ENCODE measurements at regions of chr7 and their contacts with region 1.

Region 1: GRCh38 chr7:50696810-50697582 is 85.7 kb downstream of the GRB10 start:
- DNase-seq: peak; percentile 15
- H3K4me3 Mint-ChIP-seq: no peak overlapping the region
- H3K27ac Mint-ChIP-seq: no peak overlapping the region
- H3K4me1 Mint-ChIP-seq: peaks cover 19% of the 10 kb centered on the region
- H3K27me3 Mint-ChIP-seq: no peaks in the 10 kb centered on the region

Region 2: DNA sequence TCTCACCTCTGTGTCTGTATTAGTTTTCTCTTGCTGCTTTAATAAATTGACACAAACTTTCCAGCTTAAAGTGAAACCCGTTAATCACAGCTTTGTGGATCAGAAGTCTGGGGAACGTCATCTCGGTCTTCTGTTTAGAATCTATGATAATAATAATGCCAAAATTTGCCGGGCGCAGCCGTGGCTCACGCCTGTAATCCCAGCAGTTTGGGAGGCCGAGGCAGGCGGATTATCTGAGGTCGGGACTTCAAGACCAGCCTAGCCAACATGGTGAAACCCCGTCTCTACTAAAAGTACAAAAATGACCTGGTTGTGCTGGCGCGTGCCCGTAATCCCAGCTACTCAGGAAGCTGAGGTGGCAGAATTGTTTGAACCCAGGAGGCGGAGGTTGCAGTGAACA is 595.1 kb before region 1 on chr7:
- CTCF ChIA-PET with region 1: no interaction called
- intact Hi-C with region 1: no loop called
- DNase-seq: no peak
- H3K4me3 Mint-ChIP-seq: no peak overlapping the region
- H3K27ac Mint-ChIP-seq: no peak overlapping the region
- H3K4me1 Mint-ChIP-seq: no peaks in the 10 kb centered on the region
- H3K27me3 Mint-ChIP-seq: peaks cover 2% of the 10 kb centered on the region

Region 3: DNA sequence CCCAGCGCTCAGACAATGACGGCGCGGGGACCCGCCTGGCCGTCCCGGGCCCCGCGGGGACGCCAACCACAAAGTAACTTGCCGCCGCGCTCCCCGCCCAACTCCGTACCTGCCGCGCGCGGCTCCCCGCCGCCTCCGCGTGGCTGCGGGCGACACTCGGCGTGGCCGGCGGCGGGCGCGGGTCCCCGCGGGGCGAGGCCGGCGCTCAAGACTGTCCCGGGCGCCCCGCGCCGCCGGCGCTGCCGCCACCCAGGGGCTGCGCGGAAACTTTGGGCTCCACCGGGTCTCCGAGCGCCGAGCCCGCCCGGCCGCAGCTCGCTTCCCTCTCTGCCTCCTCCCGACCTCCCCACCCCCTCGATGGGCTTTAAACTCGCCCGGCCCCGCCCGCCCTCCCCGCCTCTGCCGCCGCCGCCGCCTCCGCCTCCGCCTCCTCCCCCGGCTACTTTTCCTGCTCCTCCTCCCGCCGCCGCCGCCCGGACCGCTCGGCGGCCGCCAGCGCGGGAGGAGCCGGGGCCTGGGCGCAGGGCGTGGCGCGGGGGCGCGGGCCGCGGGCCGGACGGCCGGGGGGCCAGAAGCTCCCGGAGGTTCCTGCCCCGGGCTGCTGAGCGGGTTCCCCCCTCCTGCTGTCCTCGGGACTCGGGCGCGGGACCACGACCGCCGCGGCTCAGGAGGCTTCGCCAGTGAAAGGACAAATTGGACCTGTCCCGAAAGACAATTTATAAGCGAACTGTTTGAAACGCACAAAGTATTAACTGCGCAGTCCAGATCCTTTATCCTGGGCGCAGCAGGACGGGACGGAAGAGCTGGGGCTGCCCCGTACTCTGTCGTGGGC is 96.3 kb after region 1 on chr7:
- CTCF ChIA-PET with region 1: interaction called, 3 read pairs
- intact Hi-C with region 1: loop called (anchors 2 kb)
- DNase-seq: peak; percentile 40
- H3K4me3 Mint-ChIP-seq: peak overlapping the region; percentile 63
- H3K27ac Mint-ChIP-seq: no peak overlapping the region
- H3K4me1 Mint-ChIP-seq: peaks cover 17% of the 10 kb centered on the region
- H3K27me3 Mint-ChIP-seq: peaks cover 26% of the 10 kb centered on the region

Region 4: GRCh38 chr7:51000956-51001355 is 304.0 kb after region 1 on chr7:
- CTCF ChIA-PET with region 1: no interaction called
- intact Hi-C with region 1: loop called (anchors 2 kb)
- DNase-seq: no peak
- H3K4me3 Mint-ChIP-seq: no peak overlapping the region
- H3K27ac Mint-ChIP-seq: no peak overlapping the region
- H3K4me1 Mint-ChIP-seq: no peaks in the 10 kb centered on the region
- H3K27me3 Mint-ChIP-seq: no peaks in the 10 kb centered on the region

Region 5: DNA sequence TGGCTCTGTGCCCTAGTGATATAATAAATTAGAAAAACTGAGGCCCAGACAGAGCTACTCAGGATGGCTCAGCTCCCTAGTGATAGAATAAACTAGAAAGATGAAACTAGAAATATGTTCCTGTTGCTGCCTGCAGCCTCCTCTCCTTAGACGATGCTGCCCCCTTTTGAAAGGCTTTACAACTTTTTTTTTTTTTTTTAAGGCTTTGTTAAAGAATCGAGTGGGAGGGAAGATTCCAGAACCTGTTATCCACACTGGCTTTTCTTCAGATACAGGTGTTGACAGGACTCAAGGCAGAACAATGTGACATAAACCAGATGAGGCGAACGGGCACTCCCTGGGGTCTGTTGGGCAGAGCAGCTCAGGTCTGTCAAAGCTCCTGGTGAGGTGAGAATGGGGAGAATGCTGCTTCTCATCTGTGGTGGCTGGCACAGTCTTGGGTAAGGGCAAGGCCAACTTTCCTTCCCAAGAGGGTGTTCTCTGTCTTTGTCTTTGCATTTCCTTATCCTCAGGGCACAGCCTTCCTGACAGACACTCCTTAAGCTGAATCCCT is 444.5 kb after region 1 on chr7:
- CTCF ChIA-PET with region 1: interaction called, 10 read pairs
- intact Hi-C with region 1: loop called (anchors 10 kb)
- DNase-seq: peak; percentile 31
- H3K4me3 Mint-ChIP-seq: no peak overlapping the region
- H3K27ac Mint-ChIP-seq: no peak overlapping the region
- H3K4me1 Mint-ChIP-seq: peaks cover 14% of the 10 kb centered on the region
- H3K27me3 Mint-ChIP-seq: no peaks in the 10 kb centered on the region